ENCODE measurements at regions of chr14 and their contacts with region 1.

Region 1: DNA sequence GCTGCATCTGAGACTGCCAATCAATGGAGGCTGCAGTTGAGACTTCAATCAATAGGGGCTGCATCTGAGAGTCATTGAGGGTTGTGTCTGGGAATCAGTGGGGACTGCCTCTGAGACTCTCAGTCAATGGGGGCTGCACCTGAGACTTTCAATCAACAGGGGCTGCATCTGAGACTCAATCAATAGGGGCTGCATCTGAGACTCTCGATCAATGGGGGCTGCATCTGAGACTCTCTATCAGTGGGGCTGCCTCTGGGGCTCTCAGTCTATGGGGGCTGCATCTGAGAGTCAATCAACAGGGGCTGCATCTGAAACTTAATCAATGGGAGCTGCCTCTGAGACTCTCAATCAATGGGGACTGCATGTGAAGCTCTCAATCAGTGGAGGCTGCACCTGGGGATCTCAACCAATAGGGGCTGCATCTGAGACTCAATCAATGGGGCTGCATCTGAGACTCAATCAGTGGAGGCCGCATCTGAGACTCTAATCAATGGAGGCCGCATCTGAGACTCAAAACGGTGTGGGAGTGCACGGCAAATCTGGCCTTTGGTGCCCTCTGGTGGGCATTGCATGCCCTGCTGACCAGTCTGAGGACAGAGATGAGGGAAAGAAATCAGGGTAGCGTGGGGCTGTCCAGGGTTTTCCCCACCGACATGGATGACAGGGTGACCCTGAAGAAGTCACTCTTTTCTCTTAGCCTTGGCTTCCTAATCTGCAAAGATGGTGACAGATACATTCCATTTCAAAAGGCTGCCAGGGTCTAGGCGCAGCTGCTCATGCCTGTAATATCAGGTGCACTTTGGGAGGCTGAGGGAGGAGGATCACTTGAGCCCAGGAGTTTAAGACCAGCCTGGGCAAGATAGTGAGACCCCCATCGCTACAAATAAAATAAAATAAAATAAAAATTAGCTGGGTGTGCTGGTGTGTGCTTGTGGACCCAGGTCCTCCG is 41.3 kb upstream of the EIF5 start:
- DNase-seq: peak; percentile 82

Region 2: GRCh38 chr14:103078093-103078749 is 214.5 kb before region 1 on chr14:
- CTCF ChIA-PET with region 1: interaction called, 13 read pairs
- POLR2A ChIA-PET with region 1: no interaction called
- DNase-seq: peak; percentile 81

Region 3: GRCh38 chr14:103319422-103319821 is 26.7 kb after region 1 on chr14:
- CTCF ChIA-PET with region 1: no interaction called
- POLR2A ChIA-PET with region 1: no interaction called
- DNase-seq: no peak

Measured in HEK293T (cell line).